Posterior vena cava (tissue), 2 donors: ENCODE measurements at regions of chr6 and their contacts with region 1.

Region 1: DNA sequence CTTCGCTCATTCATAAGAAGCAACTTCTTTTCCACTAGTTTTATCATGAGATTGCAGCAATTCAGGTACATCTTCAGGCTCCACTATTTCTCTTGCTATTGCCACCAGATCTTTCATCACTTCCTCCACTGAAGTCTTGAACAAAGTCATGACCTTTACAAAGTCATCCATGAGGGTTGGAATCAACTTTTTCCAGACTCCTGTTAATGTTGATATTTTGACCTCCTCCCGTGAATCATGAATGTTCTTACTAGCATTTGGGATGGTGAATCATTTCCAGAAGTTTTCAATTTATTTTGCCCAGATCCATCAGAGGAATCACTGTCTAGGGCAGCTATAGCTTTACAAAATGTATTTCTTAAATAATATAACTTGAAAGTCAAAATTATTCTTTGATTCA is 1.5 kb downstream of the CENPQ start:
- DNase-seq: no peak

Region 2: DNA sequence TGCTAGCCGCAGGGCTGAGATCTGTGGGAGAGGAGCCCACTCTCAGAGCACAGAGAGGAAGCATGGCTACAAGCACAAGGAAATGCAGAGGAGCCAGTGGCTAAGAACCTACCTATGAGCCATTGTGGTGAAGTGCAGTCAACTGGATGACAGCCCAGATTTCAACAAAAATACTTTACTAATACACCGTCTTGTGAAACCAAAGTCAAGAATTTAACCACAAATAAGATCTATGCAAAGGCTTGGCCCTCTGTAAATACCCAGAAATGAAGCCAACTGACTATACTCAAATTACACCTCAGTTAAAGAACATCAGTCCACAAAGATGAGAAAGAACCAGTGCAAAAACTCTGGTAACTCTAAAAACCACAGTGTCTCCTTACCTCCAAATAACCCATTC is 1313.5 kb before region 1 on chr6:
- intact Hi-C with region 1: no loop called
- DNase-seq: no peak

Region 3: DNA sequence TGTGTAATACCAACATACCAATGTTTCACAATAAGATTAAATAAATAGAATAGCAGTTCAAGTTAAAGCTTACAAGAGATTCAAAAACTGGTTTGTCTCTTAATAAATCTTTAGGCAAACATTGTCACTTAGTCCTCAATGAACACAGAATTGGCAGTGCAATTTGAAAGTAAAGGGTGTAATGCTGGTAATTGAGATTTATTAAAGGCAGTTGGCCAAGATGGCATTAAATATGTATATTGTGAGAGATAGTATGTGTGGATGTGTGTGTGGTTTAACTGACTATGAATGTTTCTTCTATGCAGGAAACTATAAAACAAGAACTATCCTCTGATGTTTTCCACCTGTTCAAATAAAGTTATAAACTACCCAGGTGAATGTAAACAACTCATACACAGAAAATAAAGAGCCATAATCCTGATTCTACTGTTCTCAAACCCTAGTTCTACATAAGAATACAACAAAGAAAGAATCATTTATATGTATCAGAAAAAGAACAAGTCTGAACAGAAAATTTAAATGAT is 1085.7 kb before region 1 on chr6:
- intact Hi-C with region 1: no loop called
- DNase-seq: no peak

Region 4: GRCh38 chr6:49087369-49087768 is 377.3 kb before region 1 on chr6:
- intact Hi-C with region 1: loop called in 1 of 2 experiments (anchors 5 kb)
- DNase-seq: no peak

Region 5: DNA sequence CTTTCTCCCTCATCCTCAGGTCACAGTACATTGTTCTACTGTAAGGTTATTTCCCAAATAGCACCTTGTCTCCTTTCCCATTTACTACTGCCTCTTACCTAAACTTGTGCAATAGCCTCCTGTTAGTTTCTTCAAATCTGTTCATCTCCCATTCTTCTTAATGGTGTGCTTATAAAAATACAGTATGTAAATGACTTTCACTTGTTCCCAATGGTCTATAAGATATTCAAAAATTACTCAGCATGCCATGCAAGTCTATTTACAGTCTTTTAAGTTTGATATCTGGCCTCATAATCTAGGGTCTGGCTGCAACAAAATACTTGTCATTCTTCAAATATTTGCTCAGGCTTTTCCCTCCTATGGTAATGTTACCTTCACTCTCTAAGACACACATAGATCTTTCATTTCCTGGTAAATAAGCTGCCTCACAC is 203.4 kb after region 1 on chr6:
- intact Hi-C with region 1: no loop called
- DNase-seq: no peak

Region 6: GRCh38 chr6:49685455-49685854 is 220.8 kb after region 1 on chr6:
- intact Hi-C with region 1: no loop called
- DNase-seq: no peak